Cardiac septum (tissue), 1 donor: ENCODE measurements at regions of chr4 and their contacts with region 1.

Region 1: DNA sequence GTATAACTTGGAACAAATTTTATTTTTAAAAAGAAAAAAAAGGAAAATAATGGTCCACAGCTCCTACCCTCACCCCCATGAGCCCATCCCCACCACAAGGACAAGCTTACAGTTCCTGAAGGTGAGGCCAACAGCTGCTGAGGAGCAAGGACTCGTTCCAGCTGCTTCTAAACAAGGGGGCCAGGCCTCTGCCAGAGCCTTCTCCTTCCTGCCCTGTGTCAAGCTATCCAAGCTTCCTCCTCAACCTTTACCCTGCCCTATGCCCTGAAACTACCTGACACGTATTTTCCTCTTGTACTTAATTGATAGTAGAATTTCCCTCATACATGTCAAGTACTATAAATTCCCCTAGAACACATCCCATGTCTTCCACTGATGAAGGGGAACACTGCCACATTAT is 8.8 kb downstream of the SH3D19 start:
- DNase-seq: no peak

Region 2: DNA sequence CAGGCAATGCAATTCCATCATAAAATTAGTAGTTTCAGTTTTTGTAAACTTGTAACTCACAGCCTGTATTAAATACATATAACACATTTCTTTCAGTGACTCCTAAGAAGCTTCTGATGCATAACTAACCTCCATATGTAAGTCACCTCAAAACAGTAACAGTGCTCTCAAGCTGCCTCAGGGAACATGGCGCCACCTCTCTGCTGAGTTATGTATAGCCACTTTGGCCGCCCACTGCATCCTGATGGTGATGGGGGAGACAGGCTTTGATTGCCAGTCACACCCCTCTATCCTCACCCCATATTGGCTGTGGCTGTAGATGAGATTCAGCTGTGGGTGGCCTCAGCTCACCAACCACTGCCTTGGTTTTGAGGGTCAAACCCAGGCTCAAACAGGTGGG is 355.8 kb before region 1 on chr4:
- intact Hi-C with region 1: no loop called
- DNase-seq: no peak

Region 3: DNA sequence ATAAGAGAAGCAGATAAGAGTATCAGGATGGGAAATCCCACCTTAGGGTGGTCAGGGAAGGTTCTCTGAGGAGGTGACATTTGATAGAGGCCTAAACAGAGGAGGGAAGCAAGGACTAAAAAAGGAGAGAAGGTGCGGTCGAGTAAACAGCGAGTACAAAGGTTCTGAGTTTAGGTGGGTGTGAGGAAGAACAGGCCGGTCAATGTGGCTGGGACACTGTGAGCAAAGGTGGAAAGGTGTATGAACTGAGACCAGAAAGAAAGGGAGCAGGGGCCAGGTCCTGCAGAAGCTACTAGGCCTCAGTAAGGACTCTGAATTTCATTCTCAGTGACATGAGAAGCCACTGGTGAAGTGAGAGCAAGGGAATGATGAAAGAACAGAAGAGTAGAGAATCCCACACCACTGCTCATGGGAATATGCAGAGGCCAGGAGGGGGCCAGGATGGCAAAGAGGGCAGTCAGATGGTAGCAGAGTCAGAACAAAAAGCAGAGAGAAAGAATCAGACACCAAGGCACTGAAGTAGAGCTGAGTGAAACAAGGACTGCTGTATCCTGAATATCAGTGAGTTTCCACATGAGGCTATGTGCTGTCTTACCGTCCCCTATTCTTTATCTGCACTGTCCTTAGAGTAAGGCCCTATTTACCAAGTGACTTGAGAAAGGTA is 21.7 kb before region 1 on chr4:
- intact Hi-C with region 1: loop called (anchors 2 kb)
- DNase-seq: no peak